ENCODE measurements at regions of chr3 and their contacts with region 1.

Region 1: DNA sequence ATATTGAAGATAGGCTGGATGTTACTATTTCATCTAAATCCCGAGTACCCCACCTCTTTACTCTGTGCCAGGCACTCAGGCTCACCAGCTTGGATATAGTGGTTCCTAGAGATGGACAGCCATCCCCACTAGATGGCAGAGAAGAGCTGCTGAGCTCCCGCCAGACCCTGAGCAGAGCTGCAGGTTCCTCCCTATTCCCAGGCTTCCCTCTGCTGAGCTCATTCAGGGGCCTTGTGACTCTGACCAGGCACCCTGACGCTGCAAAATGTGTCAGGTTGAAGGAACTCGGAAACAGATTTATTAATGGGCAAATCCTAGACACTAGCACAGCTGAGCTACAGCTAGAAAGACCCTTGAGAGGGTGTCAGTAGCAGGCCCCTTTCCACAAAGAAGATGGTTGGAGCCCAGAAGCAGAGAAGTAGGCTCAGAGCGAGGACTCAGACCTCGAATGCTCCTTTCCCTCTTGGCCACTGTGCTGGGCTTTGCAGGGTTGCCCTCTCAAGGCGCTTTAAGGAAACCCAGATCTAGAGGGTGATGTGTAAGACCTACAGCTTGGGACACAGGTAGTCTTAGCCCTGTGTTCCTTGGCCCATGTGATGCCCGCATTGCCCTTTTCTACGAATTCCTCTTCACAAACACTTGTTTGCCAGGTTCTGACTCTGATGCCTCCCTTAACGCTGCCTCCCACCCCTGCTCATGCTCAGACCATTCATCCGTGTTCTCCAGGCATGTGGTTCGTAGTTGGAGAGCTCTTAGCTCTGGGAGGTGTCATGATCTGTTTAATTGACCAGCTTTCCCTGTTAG is 38.0 kb upstream of the RHO start:
- DNase-seq: peak; percentile 76
- ATAC-seq: peak; percentile 99
- H3K4me3 ChIP-seq: no peak overlapping the region
- H3K4me3 Mint-ChIP-seq: no peak overlapping the region
- H3K27ac ChIP-seq: no peak overlapping the region
- H3K27ac Mint-ChIP-seq: no peak overlapping the region
- H3K4me1 ChIP-seq: peaks cover 0 to 3% of the 10 kb centered on the region in 2 donors
- H3K4me1 Mint-ChIP-seq: peaks cover 2% of the 10 kb centered on the region
- H3K27me3 ChIP-seq: no peaks in the 10 kb centered on the region
- H3K27me3 Mint-ChIP-seq: no peaks in the 10 kb centered on the region
- CTCF ChIP-seq: peak; percentile 87

Region 2: DNA sequence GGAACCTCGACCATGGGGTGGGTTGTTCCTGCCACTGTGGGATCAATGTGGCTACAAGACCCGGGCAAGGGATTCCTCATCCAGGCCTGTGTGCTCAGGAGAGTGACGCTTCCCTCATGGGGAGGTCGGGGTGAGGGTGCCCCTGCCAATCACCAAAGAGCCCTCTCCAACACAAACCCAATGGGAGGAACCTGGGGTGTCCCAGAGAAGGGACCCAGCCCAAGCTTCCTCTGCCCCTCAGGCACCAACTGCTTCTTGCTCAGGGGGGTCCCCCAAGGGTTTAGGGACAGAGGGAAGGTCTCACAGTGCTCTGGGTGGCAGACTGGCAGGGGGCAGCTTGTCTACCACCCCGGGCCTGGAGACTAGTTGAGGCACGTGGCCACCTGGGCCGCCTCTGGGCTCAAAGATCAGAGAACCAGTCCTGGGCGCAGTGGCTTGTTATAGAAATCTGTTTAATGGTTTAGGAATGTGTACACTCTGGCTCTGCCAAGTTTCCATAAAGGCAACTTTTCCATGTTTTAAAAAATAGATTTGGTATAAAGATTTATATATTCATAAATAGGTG is 403.2 kb before region 1 on chr3:
- CTCF ChIA-PET with region 1: no interaction called
- POLR2A ChIA-PET with region 1: no interaction called
- intact Hi-C with region 1: no loop called
- DNase-seq: no peak
- ATAC-seq: no peak
- H3K4me3 ChIP-seq: no peak overlapping the region
- H3K4me3 Mint-ChIP-seq: no peak overlapping the region
- H3K27ac ChIP-seq: no peak overlapping the region
- H3K27ac Mint-ChIP-seq: no peak overlapping the region
- H3K4me1 ChIP-seq: no peaks in the 10 kb centered on the region
- H3K4me1 Mint-ChIP-seq: no peaks in the 10 kb centered on the region
- H3K27me3 ChIP-seq: no peaks in the 10 kb centered on the region
- H3K27me3 Mint-ChIP-seq: no peaks in the 10 kb centered on the region
- CTCF ChIP-seq: no peak

Region 3: GRCh38 chr3:129526121-129526900 is 35.9 kb after region 1 on chr3:
- CTCF ChIA-PET with region 1: interaction called, 19 read pairs
- POLR2A ChIA-PET with region 1: no interaction called
- intact Hi-C with region 1: no loop called
- DNase-seq: peak; percentile 86
- ATAC-seq: peak; percentile 100
- H3K4me3 ChIP-seq: no peak overlapping the region
- H3K4me3 Mint-ChIP-seq: peak overlapping the region; percentile 5
- H3K27ac ChIP-seq: peak overlapping the region; percentile 23 to 44
- H3K27ac Mint-ChIP-seq: peak overlapping the region; percentile 91
- H3K4me1 ChIP-seq: peaks cover 10 to 21% of the 10 kb centered on the region in 2 donors
- H3K4me1 Mint-ChIP-seq: peaks cover 21% of the 10 kb centered on the region
- H3K27me3 ChIP-seq: peaks cover 0 to 2% (median 0%) of the 10 kb centered on the region in 4 experiments
- H3K27me3 Mint-ChIP-seq: no peaks in the 10 kb centered on the region
- CTCF ChIP-seq: no peak

Region 4: GRCh38 chr3:129596194-129597086 is 106.0 kb after region 1 on chr3:
- CTCF ChIA-PET with region 1: interaction called, 12 read pairs
- POLR2A ChIA-PET with region 1: no interaction called
- intact Hi-C with region 1: no loop called
- DNase-seq: no peak
- ATAC-seq: no peak
- H3K4me3 ChIP-seq: no peak overlapping the region
- H3K4me3 Mint-ChIP-seq: no peak overlapping the region
- H3K27ac ChIP-seq: no peak overlapping the region
- H3K27ac Mint-ChIP-seq: peak overlapping the region; percentile 6
- H3K4me1 ChIP-seq: peaks cover 19 to 24% of the 10 kb centered on the region in 2 donors
- H3K4me1 Mint-ChIP-seq: peaks cover 24% of the 10 kb centered on the region
- H3K27me3 ChIP-seq: peaks cover 0 to 33% (median 11%) of the 10 kb centered on the region in 4 experiments
- H3K27me3 Mint-ChIP-seq: peaks cover 21% of the 10 kb centered on the region
- CTCF ChIP-seq: no peak

Region 5: DNA sequence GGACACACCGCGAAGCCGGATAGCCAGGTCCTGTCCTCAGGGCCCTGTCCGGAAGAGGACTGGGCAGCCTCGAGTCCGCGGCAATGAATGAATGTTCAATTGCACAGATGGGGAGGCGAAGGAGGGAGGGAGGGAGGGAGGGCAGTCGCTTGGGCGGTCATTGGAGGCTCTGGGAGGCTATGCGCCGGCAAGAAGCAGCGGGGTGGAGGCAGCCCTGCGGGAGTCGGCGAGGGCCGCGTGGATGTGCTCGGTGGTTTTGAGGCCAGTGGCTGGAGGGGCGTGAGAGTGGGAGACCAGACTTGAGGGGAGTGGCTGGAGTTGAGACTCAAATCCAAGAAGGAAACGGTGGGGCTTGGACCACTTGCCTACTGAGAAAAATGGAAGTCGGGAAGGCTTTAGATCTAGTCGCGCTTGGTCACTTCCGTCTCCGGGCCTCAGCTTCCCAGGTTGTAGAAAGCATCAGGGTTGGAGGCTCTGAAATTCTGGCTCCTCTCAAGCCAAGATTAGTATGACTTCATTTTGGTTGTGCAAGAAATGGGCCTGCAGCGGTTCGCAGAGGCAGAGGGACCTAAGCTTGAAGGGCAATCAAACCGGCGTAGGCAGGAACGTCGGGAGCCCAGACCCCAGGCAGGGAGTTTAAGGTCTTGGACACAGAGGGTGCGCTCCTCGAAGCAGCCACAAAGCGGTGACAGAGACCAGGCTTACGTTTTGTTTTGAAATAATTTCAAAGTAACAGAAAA is 137.2 kb after region 1 on chr3:
- CTCF ChIA-PET with region 1: interaction called, 85 read pairs
- POLR2A ChIA-PET with region 1: interaction called, 4 read pairs
- intact Hi-C with region 1: loop called (anchors 1 kb)
- DNase-seq: peak; percentile 78
- ATAC-seq: peak; percentile 52
- H3K4me3 ChIP-seq: peak overlapping the region; percentile 49 to 86 (median 72)
- H3K4me3 Mint-ChIP-seq: peak overlapping the region; percentile 98
- H3K27ac ChIP-seq: peak overlapping the region in 1 of 2 donors; percentile 37
- H3K27ac Mint-ChIP-seq: peak overlapping the region; percentile 88
- H3K4me1 ChIP-seq: peaks cover 5 to 18% of the 10 kb centered on the region in 2 donors
- H3K4me1 Mint-ChIP-seq: peaks cover 17% of the 10 kb centered on the region
- H3K27me3 ChIP-seq: no peaks in the 10 kb centered on the region
- H3K27me3 Mint-ChIP-seq: no peaks in the 10 kb centered on the region
- CTCF ChIP-seq: peak; percentile 77

Region 6: DNA sequence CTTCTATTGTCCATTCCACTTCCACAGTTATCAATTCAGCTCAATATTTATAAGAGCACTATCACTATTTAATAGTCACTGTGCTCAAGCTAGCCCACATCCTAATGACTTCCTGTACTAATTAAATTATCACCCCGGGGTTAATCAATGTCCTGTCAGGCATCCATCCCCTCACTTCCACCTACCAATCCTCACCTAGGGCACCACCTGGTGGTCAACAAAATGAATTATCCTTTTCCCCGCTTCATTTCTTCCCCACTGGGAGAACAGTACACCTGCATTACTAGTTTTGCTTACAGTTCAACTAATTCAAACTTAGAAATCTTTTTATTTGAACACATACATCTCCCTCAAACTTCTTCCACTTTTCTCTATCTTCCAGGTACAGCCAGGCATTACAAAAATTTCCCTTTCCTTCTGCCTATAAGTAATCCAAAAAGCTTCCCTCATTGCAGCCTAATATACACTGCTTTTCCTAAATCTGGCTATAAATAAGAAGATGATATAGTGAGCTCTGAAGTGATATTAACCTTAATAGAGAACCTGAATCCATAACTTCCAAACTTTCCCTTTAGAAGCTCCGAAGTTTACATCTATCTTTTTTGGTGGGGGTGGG is 334.6 kb after region 1 on chr3:
- CTCF ChIA-PET with region 1: interaction called, 163 read pairs
- POLR2A ChIA-PET with region 1: interaction called, 8 read pairs
- intact Hi-C with region 1: loop called (anchors 1 kb)
- DNase-seq: peak; percentile 74
- ATAC-seq: peak; percentile 50
- H3K4me3 ChIP-seq: no peak overlapping the region
- H3K4me3 Mint-ChIP-seq: no peak overlapping the region
- H3K27ac ChIP-seq: no peak overlapping the region
- H3K27ac Mint-ChIP-seq: no peak overlapping the region
- H3K4me1 ChIP-seq: peaks cover 11 to 12% of the 10 kb centered on the region in 2 donors
- H3K4me1 Mint-ChIP-seq: peaks cover 41% of the 10 kb centered on the region
- H3K27me3 ChIP-seq: no peaks in the 10 kb centered on the region
- H3K27me3 Mint-ChIP-seq: no peaks in the 10 kb centered on the region
- CTCF ChIP-seq: peak; percentile 80

Region 7: DNA sequence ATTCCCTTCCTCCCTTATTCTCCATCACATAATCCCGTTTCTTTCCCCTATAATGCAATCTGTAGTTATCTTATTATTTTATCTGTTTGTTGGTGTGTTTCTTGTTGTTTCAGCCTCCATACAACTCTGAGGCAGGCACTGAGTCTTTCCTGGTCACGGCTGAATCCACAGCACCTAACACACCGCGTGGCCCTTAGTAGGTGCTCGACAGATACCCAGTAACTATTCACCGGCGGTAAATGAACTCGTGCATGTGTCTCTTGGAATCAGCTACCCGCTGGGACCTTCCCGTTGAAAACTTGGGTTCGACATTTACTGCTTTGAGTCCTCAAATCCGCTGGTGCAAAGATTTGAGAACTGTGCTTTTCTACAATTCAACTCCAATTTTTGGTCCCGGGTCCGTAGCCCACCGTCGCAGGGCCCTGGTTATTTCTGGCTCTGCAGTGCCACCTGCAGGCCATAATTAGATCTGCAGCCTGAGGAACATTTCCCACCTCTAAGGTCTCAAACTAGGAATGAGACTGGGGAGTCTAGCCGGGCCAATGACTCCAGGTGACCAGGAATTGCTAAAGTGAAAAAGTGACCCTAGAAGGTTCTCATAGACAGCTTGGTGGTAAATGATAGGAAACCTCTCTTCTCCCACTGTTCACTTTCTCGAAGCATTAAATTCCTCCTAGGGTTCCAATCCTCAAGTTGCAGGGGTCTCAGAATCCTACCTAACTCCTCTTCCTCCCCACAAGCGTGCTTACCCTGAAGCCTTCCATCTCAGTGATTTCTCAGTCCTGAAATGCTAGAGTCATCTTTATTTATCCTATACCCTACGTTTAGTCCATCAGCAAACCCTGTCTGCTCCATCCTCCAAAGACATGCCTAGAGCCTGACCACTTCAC is 444.0 kb after region 1 on chr3:
- CTCF ChIA-PET with region 1: interaction called, 23 read pairs
- POLR2A ChIA-PET with region 1: no interaction called
- intact Hi-C with region 1: no loop called
- DNase-seq: peak; percentile 63
- ATAC-seq: peak; percentile 45
- H3K4me3 ChIP-seq: no peak overlapping the region
- H3K4me3 Mint-ChIP-seq: no peak overlapping the region
- H3K27ac ChIP-seq: no peak overlapping the region
- H3K27ac Mint-ChIP-seq: no peak overlapping the region
- H3K4me1 ChIP-seq: peaks cover 2 to 4% of the 10 kb centered on the region in 2 donors
- H3K4me1 Mint-ChIP-seq: peaks cover 8% of the 10 kb centered on the region
- H3K27me3 ChIP-seq: peaks cover 0 to 5% (median 0%) of the 10 kb centered on the region in 4 experiments
- H3K27me3 Mint-ChIP-seq: peaks cover 7% of the 10 kb centered on the region
- CTCF ChIP-seq: peak; percentile 94